ENCODE measurements at regions of chr12 and their contacts with region 1.

Region 1: GRCh38 chr12:80186727-80187217 is 87.4 kb downstream of the OTOGL start:
- DNase-seq: peak; percentile 60 to 72
- H3K4me3 ChIP-seq: no peak overlapping the region
- H3K4me1 ChIP-seq: no peaks in the 10 kb centered on the region; the same call in 1 of the 2 replicates
- H3K27me3 ChIP-seq: no peaks in the 10 kb centered on the region

Region 2: GRCh38 chr12:79555028-79555930 is 631.5 kb before region 1 on chr12:
- in situ Hi-C with region 1: loop called (anchors 25 kb)
- DNase-seq: peak in 1 of 2 experiments; percentile 39
- H3K4me3 ChIP-seq: no peak overlapping the region
- H3K4me1 ChIP-seq: peaks cover 3% of the 10 kb centered on the region
- H3K27me3 ChIP-seq: no peaks in the 10 kb centered on the region